ENCODE measurements at regions of chr20 and their contacts with region 1.

Region 1: DNA sequence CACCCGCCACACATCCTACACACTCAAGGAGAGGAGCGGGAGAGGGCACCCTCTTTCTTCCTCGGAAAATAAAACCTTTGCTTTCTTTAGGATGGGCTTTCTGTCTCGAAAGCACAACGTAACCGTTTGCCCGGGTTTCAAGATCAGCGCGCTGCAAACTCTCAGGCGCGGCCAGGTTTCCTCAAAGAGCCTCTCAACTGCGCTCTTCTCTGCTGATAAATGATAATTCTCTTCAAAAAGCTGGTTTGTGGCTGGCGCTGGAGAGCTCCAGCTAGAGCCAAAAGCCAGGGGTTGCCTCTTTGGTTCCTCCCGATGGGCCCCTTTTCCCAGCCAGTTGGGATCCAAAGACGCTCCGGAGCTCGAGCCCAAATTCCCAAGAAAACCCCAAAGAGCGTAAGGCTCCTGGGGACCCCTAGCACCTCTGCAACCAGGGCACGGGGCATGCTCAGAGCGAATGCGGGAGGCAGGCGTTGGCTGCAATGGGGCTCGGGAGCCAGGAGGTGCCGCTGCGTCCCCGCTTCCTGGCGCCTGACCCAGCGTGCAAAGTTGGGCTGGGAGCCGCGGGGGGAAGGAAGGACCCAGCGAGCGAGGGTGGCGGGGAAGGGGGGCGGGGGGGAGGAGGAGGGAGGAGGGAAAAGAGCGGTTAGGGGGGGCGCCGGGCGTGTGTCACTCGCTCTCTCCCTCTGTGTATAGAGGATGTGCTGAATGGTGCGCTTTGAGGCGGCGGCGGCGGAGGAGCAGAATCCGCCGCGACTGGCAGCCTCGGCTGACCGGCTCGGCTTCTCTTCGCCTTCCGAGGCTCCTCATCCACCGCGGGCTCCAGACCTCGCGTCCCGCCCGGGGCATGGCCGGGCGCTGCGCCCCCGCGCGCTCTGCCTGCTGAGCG is at the start of gene PLCB1:
- DNase-seq: peak; percentile 82 to 85 (median 83)
- H3K4me3 ChIP-seq: peak within 1 kb of the TSS; percentile 44 to 83 (median 63)
- H3K4me3 Mint-ChIP-seq: peak within 1 kb of the TSS; percentile 97
- H3K27ac ChIP-seq: peak within 1 kb of the TSS in 1 of 2 donors; percentile 73
- H3K27ac Mint-ChIP-seq: peak within 1 kb of the TSS in 6 of 7 donors; percentile 72 to 92 (median 86)
- H3K4me1 ChIP-seq: peaks cover 27 to 41% of the 10 kb centered on the region in 2 donors
- H3K4me1 Mint-ChIP-seq: peaks cover 46% of the 10 kb centered on the region
- H3K27me3 ChIP-seq: peaks cover 0 to 3% of the 10 kb centered on the region in 2 donors
- H3K27me3 Mint-ChIP-seq: peaks cover 4 to 8% (median 5%) of the 10 kb centered on the region in 3 donors
- CTCF ChIP-seq: peak; percentile 83
- polyA plus RNA-seq, gene PLCB1: 8.6 to 16.4 (median 13.2) TPM

Region 2: GRCh38 chr20:8043687-8044282 is 88.1 kb before region 1 on chr20:
- intact Hi-C with region 1: loop called in 1 of 2 experiments (anchors 10 kb)
- DNase-seq: peak; percentile 39 to 74 (median 57)
- H3K4me3 ChIP-seq: no peak overlapping the region
- H3K4me3 Mint-ChIP-seq: no peak overlapping the region
- H3K27ac ChIP-seq: no peak overlapping the region
- H3K27ac Mint-ChIP-seq: no peak overlapping the region
- H3K4me1 ChIP-seq: no peaks in the 10 kb centered on the region
- H3K4me1 Mint-ChIP-seq: peaks cover 1% of the 10 kb centered on the region
- H3K27me3 ChIP-seq: no peaks in the 10 kb centered on the region
- H3K27me3 Mint-ChIP-seq: no peaks in the 10 kb centered on the region
- CTCF ChIP-seq: peak; percentile 77

Region 3: DNA sequence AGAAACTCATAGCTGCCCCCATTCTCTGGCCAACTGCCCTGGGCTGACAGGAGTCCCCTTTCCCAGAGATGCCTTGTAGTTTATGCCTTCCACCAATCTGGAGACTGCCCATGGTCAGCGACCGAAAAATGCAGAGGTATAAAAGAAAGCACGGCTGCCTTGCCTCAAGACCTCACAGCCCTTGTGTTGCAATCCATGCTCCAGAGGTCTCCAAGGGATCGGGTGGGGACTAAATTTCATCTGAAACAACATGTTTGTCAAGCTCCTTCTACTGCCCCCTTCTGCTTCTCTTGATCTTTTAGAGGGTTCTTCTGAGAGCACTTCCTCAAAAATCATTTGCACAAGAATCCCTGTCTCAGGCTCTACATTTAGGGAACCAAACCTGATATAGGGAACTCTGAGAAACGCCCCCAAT is 129.0 kb after region 1 on chr20:
- intact Hi-C with region 1: loop called in 1 of 2 experiments (anchors 10 kb)
- DNase-seq: peak; percentile 67 to 68 (median 68)
- H3K4me3 ChIP-seq: peak overlapping the region in 1 of 3 experiments; percentile 38
- H3K4me3 Mint-ChIP-seq: peak overlapping the region in 1 of 2 donors; percentile 61
- H3K27ac ChIP-seq: peak overlapping the region in 1 of 2 donors; percentile 29
- H3K27ac Mint-ChIP-seq: peak overlapping the region in 5 of 7 donors; percentile 26 to 78 (median 63)
- H3K4me1 ChIP-seq: peaks cover 11 to 12% of the 10 kb centered on the region in 2 donors
- H3K4me1 Mint-ChIP-seq: peaks cover 16% of the 10 kb centered on the region
- H3K27me3 ChIP-seq: no peaks in the 10 kb centered on the region
- H3K27me3 Mint-ChIP-seq: no peaks in the 10 kb centered on the region
- CTCF ChIP-seq: peak; percentile 27

Region 4: DNA sequence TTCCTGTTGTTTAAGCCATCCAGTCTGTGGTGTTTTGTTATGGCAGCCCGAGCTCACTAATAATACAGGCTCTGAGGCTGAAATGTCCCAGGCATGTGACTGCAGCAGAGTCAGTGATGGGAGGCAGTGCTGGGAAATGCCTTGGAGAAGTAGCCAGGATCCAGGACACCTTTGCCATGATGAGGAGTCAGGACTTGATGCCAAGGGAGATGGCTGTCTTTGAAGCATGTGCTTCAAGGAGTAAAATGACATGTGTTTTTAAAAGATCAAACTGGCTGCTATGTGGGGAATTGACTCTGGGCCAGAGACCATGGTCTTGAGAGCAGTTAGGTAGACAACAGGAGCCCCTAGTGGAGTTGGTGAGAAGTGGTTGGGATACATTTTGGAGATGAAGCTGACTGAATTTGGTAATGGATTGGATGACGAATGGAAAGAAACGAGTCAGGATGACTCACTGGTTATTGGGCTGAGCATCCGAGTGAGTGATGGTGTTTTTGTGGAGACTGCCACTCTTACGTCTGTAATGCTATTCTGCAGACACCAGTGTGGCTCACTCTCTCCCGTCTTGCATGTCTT is 322.4 kb after region 1 on chr20:
- intact Hi-C with region 1: loop called in 1 of 2 experiments (anchors 10 kb)
- DNase-seq: peak; percentile 87 to 94 (median 93)
- H3K4me3 ChIP-seq: no peak overlapping the region
- H3K4me3 Mint-ChIP-seq: peak overlapping the region in 1 of 2 donors; percentile 23
- H3K27ac ChIP-seq: peak overlapping the region in 1 of 2 donors; percentile 62
- H3K27ac Mint-ChIP-seq: peak overlapping the region in 6 of 7 donors; percentile 55 to 92 (median 82)
- H3K4me1 ChIP-seq: peaks cover 34 to 42% of the 10 kb centered on the region in 2 donors
- H3K4me1 Mint-ChIP-seq: peaks cover 48% of the 10 kb centered on the region
- H3K27me3 ChIP-seq: no peaks in the 10 kb centered on the region
- H3K27me3 Mint-ChIP-seq: peaks cover 0 to 5% (median 0%) of the 10 kb centered on the region in 3 donors
- CTCF ChIP-seq: peak; percentile 76

Region 5: GRCh38 chr20:8722276-8722928 is 590.6 kb after region 1 on chr20:
- intact Hi-C with region 1: loop called in 1 of 2 experiments (anchors 2 kb)
- DNase-seq: peak; percentile 51 to 72 (median 65)
- H3K4me3 ChIP-seq: no peak overlapping the region
- H3K4me3 Mint-ChIP-seq: no peak overlapping the region
- H3K27ac ChIP-seq: no peak overlapping the region
- H3K27ac Mint-ChIP-seq: no peak overlapping the region
- H3K4me1 ChIP-seq: peaks cover 6 to 7% of the 10 kb centered on the region in 2 donors
- H3K4me1 Mint-ChIP-seq: peaks cover 16% of the 10 kb centered on the region
- H3K27me3 ChIP-seq: no peaks in the 10 kb centered on the region
- H3K27me3 Mint-ChIP-seq: no peaks in the 10 kb centered on the region
- CTCF ChIP-seq: peak; percentile 80